Astrocyte of the cerebellum (primary cell): ENCODE measurements at regions of chr7 and their contacts with region 1.

Region 1: GRCh38 chr7:26567263-26567662 is 275.6 kb downstream of the SNX10 start:
- DNase-seq: no peak
- H3K4me3 ChIP-seq: no peak overlapping the region
- CTCF ChIP-seq: no peak

Region 2: GRCh38 chr7:26490650-26491624 is 76.3 kb before region 1 on chr7:
- in situ Hi-C with region 1: loop called (anchors 5 kb)
- DNase-seq: no peak
- H3K4me3 ChIP-seq: no peak overlapping the region
- CTCF ChIP-seq: no peak

Region 3: GRCh38 chr7:26534649-26535482 is 32.4 kb before region 1 on chr7:
- in situ Hi-C with region 1: loop called (anchors 5 kb)
- DNase-seq: no peak
- H3K4me3 ChIP-seq: no peak overlapping the region
- CTCF ChIP-seq: no peak